Caco-2 (cell line): ENCODE measurements at regions of chr17 and their contacts with region 1.

Region 1: GRCh38 chr17:21511363-21512198 is 135.4 kb downstream of the KCNJ12 start:
- DNase-seq: peak; percentile 82
- H3K4me3 ChIP-seq: peak overlapping the region; percentile 33
- H3K4me3 Mint-ChIP-seq: peak overlapping the region; percentile 47
- H3K27ac Mint-ChIP-seq: no peak overlapping the region
- H3K4me1 ChIP-seq: no peaks in the 10 kb centered on the region
- H3K4me1 Mint-ChIP-seq: peaks cover 7% of the 10 kb centered on the region
- H3K27me3 ChIP-seq: no peaks in the 10 kb centered on the region; the same call in 1 of the 2 replicates
- H3K27me3 Mint-ChIP-seq: peaks cover 17% of the 10 kb centered on the region
- CTCF ChIP-seq: peak; percentile 52 to 81

Region 2: DNA sequence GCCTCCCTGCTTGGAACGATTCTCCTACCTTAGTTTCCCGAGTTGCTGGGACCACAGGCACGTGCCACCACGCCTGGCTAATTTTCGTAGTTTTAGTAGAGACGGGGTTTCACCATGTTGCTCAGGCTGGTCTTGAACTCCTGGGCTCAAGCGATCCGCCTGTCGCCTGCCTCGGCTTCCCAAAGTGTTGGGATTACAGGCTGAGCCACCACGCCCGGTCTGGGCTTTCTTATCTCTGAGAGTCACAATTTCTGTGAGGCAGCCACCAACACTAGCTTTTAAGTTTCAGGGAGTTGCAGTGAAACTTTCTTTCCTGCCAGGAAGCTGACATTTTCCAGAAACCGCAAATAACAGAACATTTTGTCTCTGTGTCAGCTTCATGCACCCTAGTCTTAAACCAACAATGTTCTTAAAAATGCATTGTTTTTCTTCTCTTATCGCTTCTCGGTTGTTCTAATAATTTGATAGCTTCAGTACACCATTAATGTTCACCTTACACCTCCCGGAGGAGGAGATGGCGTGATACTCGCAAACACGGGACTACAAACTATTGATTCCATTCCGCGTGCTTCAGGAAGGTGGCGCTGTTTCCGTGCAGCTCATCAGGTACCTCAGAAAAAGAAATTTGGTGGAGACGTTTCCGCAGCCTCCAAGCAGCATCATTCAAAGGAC is 392.2 kb before region 1 on chr17:
- CTCF ChIA-PET with region 1: interaction called, 9 read pairs
- POLR2A ChIA-PET with region 1: no interaction called
- intact Hi-C with region 1: loop called (anchors 2 kb)
- DNase-seq: peak; percentile 69 to 75
- H3K4me3 ChIP-seq: no peak overlapping the region; the same call in 1 of the 2 replicates
- H3K4me3 Mint-ChIP-seq: peak overlapping the region; percentile 22
- H3K27ac Mint-ChIP-seq: no peak overlapping the region
- H3K4me1 ChIP-seq: peaks cover 7% of the 10 kb centered on the region; the same call in 1 of the 2 replicates
- H3K4me1 Mint-ChIP-seq: peaks cover 4% of the 10 kb centered on the region
- H3K27me3 ChIP-seq: no peaks in the 10 kb centered on the region
- H3K27me3 Mint-ChIP-seq: no peaks in the 10 kb centered on the region
- CTCF ChIP-seq: peak; percentile 90 to 97

Region 3: DNA sequence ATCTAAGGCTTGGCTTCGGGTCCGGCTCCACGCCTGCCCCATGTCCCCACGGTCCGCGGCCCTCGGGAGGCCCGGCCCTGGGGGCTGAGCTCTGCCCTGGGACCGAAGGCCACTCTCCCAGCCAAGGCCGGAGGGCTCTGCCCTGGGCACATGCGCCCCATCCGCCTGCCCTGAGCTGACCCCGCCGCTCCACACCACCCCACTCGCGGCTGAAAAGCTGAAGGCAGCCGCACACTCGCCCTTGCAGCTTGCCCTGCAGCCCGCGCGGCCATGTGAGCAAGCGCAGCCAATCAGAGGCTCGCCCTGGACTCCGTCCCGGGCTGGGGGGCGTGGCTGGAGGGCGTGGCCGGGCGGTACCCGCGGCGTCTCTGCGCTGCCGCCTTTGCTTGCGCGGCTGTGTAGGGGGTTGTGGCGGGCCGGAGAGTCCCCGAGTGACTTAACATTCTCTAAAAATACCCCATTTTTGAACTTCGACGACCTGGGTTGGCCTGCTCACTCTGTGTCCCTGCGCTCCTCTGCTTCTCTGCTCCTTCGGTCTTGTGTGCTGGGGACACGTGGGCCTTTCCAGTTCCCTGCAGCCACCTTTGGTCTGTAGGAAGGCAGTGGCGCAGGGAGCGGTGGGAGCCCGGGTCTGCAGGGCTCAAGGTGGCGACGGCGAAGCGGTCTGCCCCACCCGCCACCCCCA is 235.9 kb before region 1 on chr17:
- CTCF ChIA-PET with region 1: interaction called, 3 read pairs
- POLR2A ChIA-PET with region 1: no interaction called
- intact Hi-C with region 1: loop called (anchors 1 kb)
- DNase-seq: peak; percentile 92 to 97
- H3K4me3 ChIP-seq: peak overlapping the region; percentile 87
- H3K4me3 Mint-ChIP-seq: peak overlapping the region; percentile 90
- H3K27ac Mint-ChIP-seq: peak overlapping the region; percentile 83
- H3K4me1 ChIP-seq: peaks cover 4% of the 10 kb centered on the region
- H3K4me1 Mint-ChIP-seq: peaks cover 7% of the 10 kb centered on the region
- H3K27me3 ChIP-seq: no peaks in the 10 kb centered on the region; the same call in 1 of the 2 replicates
- H3K27me3 Mint-ChIP-seq: no peaks in the 10 kb centered on the region
- CTCF ChIP-seq: peak in 1 of 2 experiments; percentile 35

Region 4: GRCh38 chr17:21284319-21285163 is 227.0 kb before region 1 on chr17 and contains the start of gene MAP2K3:
- CTCF ChIA-PET with region 1: interaction called, 3 read pairs
- POLR2A ChIA-PET with region 1: no interaction called
- intact Hi-C with region 1: loop called (anchors 1 kb)
- DNase-seq: peak; percentile 99 to 100
- H3K4me3 ChIP-seq: peak within 1 kb of the TSS; percentile 83
- H3K4me3 Mint-ChIP-seq: peak within 1 kb of the TSS; percentile 89
- H3K27ac Mint-ChIP-seq: peak within 1 kb of the TSS; percentile 70
- H3K4me1 ChIP-seq: peaks cover 22% of the 10 kb centered on the region
- H3K4me1 Mint-ChIP-seq: peaks cover 24% of the 10 kb centered on the region
- H3K27me3 ChIP-seq: no peaks in the 10 kb centered on the region; the same call in 1 of the 2 replicates
- H3K27me3 Mint-ChIP-seq: no peaks in the 10 kb centered on the region
- CTCF ChIP-seq: no peak
- total RNA-seq, gene MAP2K3: 49.5 and 50.9 TPM in 2 replicates

Region 5: GRCh38 chr17:21318439-21318838 is 193.1 kb before region 1 on chr17:
- CTCF ChIA-PET with region 1: no interaction called
- POLR2A ChIA-PET with region 1: no interaction called
- intact Hi-C with region 1: loop called (anchors 5 kb)
- DNase-seq: no peak
- H3K4me3 ChIP-seq: no peak overlapping the region
- H3K4me3 Mint-ChIP-seq: no peak overlapping the region
- H3K27ac Mint-ChIP-seq: no peak overlapping the region
- H3K4me1 ChIP-seq: no peaks in the 10 kb centered on the region
- H3K4me1 Mint-ChIP-seq: peaks cover 7% of the 10 kb centered on the region
- H3K27me3 ChIP-seq: no peaks in the 10 kb centered on the region
- H3K27me3 Mint-ChIP-seq: peaks cover 4% of the 10 kb centered on the region
- CTCF ChIP-seq: no peak

Region 6: GRCh38 chr17:21457051-21458026 is 54.2 kb before region 1 on chr17:
- CTCF ChIA-PET with region 1: interaction called, 51 read pairs
- POLR2A ChIA-PET with region 1: no interaction called
- intact Hi-C with region 1: loop called (anchors 1 kb)
- DNase-seq: peak; percentile 88 to 96
- H3K4me3 ChIP-seq: no peak overlapping the region
- H3K4me3 Mint-ChIP-seq: no peak overlapping the region
- H3K27ac Mint-ChIP-seq: no peak overlapping the region
- H3K4me1 ChIP-seq: no peaks in the 10 kb centered on the region
- H3K4me1 Mint-ChIP-seq: peaks cover 7% of the 10 kb centered on the region
- H3K27me3 ChIP-seq: no peaks in the 10 kb centered on the region
- H3K27me3 Mint-ChIP-seq: peaks cover 18% of the 10 kb centered on the region
- CTCF ChIP-seq: peak; percentile 90 to 94

Region 7: DNA sequence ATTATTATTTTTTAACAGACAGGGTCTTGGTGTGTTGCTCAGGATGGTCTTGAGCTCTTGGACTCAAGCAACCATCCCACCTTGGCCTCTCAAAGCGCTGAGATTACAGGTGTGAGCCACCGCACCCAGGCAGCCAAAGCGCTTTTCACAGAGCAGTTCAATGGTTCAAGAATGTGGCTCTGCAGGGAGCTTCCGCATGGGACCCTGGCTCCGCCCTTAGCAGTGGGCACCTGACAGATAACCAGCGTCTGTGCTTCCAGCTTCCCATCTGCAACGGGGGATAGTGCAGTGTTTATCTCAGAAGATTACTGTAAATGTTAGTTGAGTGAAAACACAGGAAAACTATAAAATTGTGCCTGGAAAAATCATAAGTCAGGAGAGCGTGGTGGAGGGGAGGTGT is 36.0 kb before region 1 on chr17:
- CTCF ChIA-PET with region 1: interaction called, 4 read pairs
- POLR2A ChIA-PET with region 1: no interaction called
- intact Hi-C with region 1: loop called (anchors 5 kb)
- DNase-seq: no peak
- H3K4me3 ChIP-seq: no peak overlapping the region
- H3K4me3 Mint-ChIP-seq: no peak overlapping the region
- H3K27ac Mint-ChIP-seq: no peak overlapping the region
- H3K4me1 ChIP-seq: no peaks in the 10 kb centered on the region
- H3K4me1 Mint-ChIP-seq: no peaks in the 10 kb centered on the region
- H3K27me3 ChIP-seq: no peaks in the 10 kb centered on the region; the same call in 1 of the 2 replicates
- H3K27me3 Mint-ChIP-seq: peaks cover 29% of the 10 kb centered on the region
- CTCF ChIP-seq: no peak